ENCODE measurements at regions of chr21 and their contacts with region 1.

Region 1: DNA sequence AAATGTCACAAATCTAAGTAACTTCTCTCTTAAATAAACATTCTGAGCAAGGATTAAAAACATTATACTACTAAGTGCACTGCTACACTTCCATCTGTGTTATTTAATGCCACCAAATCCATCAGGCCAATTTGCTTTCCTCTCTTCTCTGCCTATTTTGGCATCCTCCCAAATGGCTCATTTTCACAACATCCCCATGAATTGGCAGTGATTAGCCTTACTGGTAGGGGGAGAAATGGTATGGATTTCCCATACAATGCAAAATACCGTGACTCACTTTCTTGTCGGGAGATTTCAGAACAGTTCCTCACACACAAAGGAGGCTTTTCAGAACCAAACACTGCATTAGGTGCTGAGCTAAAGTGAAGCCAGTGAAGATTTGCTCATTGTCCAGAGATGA is 195.7 kb downstream of the MIS18A start:
- DNase-seq: no peak
- ATAC-seq: no peak
- H3K4me3 ChIP-seq: no peak overlapping the region
- H3K27ac ChIP-seq: no peak overlapping the region
- H3K4me1 ChIP-seq: no peaks in the 10 kb centered on the region
- H3K27me3 ChIP-seq: no peaks in the 10 kb centered on the region
- CTCF ChIP-seq: no peak

Region 2: GRCh38 chr21:32030146-32030652 is 53.0 kb before region 1 on chr21:
- intact Hi-C with region 1: loop called in 1 of 10 experiments (anchors 10 kb)
- DNase-seq: no peak
- ATAC-seq: peak in 3 of 8 donors; percentile 10 to 61 (median 17)
- H3K4me3 ChIP-seq: no peak overlapping the region
- H3K27ac ChIP-seq: no peak overlapping the region
- H3K4me1 ChIP-seq: peaks cover 0 to 8% (median 0%) of the 10 kb centered on the region in 9 donors
- H3K27me3 ChIP-seq: peaks cover 0 to 3% (median 0%) of the 10 kb centered on the region in 7 donors
- CTCF ChIP-seq: no peak